ENCODE measurements at regions of chr2 and their contacts with region 1.

Region 1: DNA sequence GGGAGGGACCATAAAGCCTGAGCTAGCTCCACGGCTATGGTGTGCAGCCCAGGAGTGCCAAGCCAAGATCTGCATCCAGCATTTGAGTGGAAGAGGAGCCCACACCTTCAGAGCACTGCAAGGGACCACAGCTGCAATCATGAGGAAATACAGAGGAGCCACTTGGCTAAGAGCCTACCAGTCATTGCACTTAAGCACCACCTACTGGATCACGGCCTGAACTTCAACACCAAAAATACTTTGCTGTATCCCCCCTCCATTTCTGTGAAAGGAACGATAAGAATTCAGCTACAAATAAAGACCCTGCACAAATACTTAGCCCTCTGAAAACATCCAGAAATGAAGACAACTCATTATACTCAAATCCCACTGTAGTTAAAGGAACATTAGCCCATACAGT is 545.3 kb downstream of the TSN start:
- DNase-seq: peak; percentile 60
- ATAC-seq: peak; percentile 31; the same call in 1 of the 2 replicates
- H3K4me3 ChIP-seq: no peak overlapping the region
- H3K27ac ChIP-seq: no peak overlapping the region
- H3K4me1 ChIP-seq: no peaks in the 10 kb centered on the region
- H3K27me3 ChIP-seq: no peaks in the 10 kb centered on the region
- CTCF ChIP-seq: peak; percentile 82

Region 2: GRCh38 chr2:121764681-121765228 is 536.0 kb before region 1 on chr2:
- CTCF ChIA-PET with region 1: no interaction called
- POLR2A ChIA-PET with region 1: no interaction called
- intact Hi-C with region 1: no loop called
- DNase-seq: no peak
- ATAC-seq: no peak
- H3K4me3 ChIP-seq: no peak overlapping the region
- H3K27ac ChIP-seq: no peak overlapping the region
- H3K4me1 ChIP-seq: no peaks in the 10 kb centered on the region
- H3K27me3 ChIP-seq: no peaks in the 10 kb centered on the region
- CTCF ChIP-seq: no peak

Region 3: GRCh38 chr2:121810959-121811853 is 489.6 kb before region 1 on chr2:
- CTCF ChIA-PET with region 1: no interaction called
- POLR2A ChIA-PET with region 1: no interaction called
- intact Hi-C with region 1: loop called (anchors 5 kb)
- DNase-seq: peak; percentile 79
- ATAC-seq: peak; percentile 97
- H3K4me3 ChIP-seq: no peak overlapping the region
- H3K27ac ChIP-seq: no peak overlapping the region
- H3K4me1 ChIP-seq: no peaks in the 10 kb centered on the region
- H3K27me3 ChIP-seq: 0 out of 2 replicates have a peak, but pooled peaks cover 4% of the 10 kb centered on the region
- CTCF ChIP-seq: peak; percentile 78

Region 4: GRCh38 chr2:121974897-121975661 is 325.7 kb before region 1 on chr2:
- CTCF ChIA-PET with region 1: no interaction called
- POLR2A ChIA-PET with region 1: no interaction called
- intact Hi-C with region 1: loop called (anchors 10 kb)
- DNase-seq: peak; percentile 91
- ATAC-seq: peak; percentile 98
- H3K4me3 ChIP-seq: peak overlapping the region; percentile 48; the same call in 1 of the 2 replicates
- H3K27ac ChIP-seq: no peak overlapping the region
- H3K4me1 ChIP-seq: no peaks in the 10 kb centered on the region; the same call in 1 of the 2 replicates
- H3K27me3 ChIP-seq: peaks cover 17% of the 10 kb centered on the region; the same call in 1 of the 2 replicates
- CTCF ChIP-seq: peak; percentile 79

Region 5: GRCh38 chr2:122191341-122191740 is 109.4 kb before region 1 on chr2:
- CTCF ChIA-PET with region 1: no interaction called
- POLR2A ChIA-PET with region 1: no interaction called
- intact Hi-C with region 1: loop called (anchors 2 kb)
- DNase-seq: peak; percentile 77
- ATAC-seq: peak; percentile 97
- H3K4me3 ChIP-seq: no peak overlapping the region
- H3K27ac ChIP-seq: no peak overlapping the region
- H3K4me1 ChIP-seq: peaks cover 10% of the 10 kb centered on the region; the same call in 1 of the 2 replicates
- H3K27me3 ChIP-seq: no peaks in the 10 kb centered on the region
- CTCF ChIP-seq: peak; percentile 85

Region 6: DNA sequence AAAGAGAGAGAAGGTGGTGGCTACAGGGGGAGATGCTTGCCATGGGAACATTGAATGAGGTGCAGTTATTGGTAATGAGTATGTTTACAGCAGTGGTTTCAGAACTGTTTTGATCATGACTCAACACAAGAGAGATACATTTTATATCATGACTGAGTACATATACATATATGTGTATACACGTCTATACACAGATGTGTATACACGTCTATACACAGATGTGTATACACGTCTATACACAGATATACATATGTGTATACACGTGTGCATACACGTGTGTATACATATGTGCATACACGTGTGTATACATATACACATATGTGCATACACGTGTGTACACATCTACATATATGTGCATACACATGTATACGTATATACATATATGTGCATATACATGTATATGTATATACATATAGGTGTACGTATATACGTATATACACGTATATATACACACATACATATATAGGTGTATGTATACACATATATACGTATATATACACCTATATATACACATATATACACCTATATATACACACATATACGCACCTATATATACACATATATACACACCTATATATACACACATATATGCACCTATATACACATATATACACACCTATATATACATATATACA is 26.9 kb before region 1 on chr2:
- CTCF ChIA-PET with region 1: no interaction called
- POLR2A ChIA-PET with region 1: no interaction called
- intact Hi-C with region 1: no loop called
- DNase-seq: no peak
- ATAC-seq: no peak
- H3K4me3 ChIP-seq: no peak overlapping the region
- H3K27ac ChIP-seq: no peak overlapping the region
- H3K4me1 ChIP-seq: no peaks in the 10 kb centered on the region
- H3K27me3 ChIP-seq: peaks cover 10% of the 10 kb centered on the region; the same call in 1 of the 2 replicates
- CTCF ChIP-seq: no peak

Region 7: GRCh38 chr2:122491011-122491410 is 190.3 kb after region 1 on chr2:
- CTCF ChIA-PET with region 1: no interaction called
- POLR2A ChIA-PET with region 1: no interaction called
- intact Hi-C with region 1: no loop called
- DNase-seq: no peak
- ATAC-seq: no peak
- H3K4me3 ChIP-seq: no peak overlapping the region
- H3K27ac ChIP-seq: no peak overlapping the region
- H3K4me1 ChIP-seq: no peaks in the 10 kb centered on the region
- H3K27me3 ChIP-seq: no peaks in the 10 kb centered on the region
- CTCF ChIP-seq: no peak